ENCODE measurements at regions of chr22 and their contacts with region 1.

Region 1: GRCh38 chr22:37538590-37539357 is 19.6 kb upstream of the CARD10 start:
- DNase-seq: peak; percentile 88 to 91
- ATAC-seq: peak; percentile 99 to 100
- H3K4me3 ChIP-seq: no peak overlapping the region
- H3K27ac ChIP-seq: peak overlapping the region; percentile 54 to 75; a peak in 5 of 6 replicates
- H3K4me1 ChIP-seq: peaks cover 24% of the 10 kb centered on the region
- CTCF ChIP-seq: peak; percentile 85
- EP300 ChIP-seq: no peak
- POLR2A ChIP-seq: no peak
- RAD21 ChIP-seq: peak; percentile 96 to 97

Region 2: DNA sequence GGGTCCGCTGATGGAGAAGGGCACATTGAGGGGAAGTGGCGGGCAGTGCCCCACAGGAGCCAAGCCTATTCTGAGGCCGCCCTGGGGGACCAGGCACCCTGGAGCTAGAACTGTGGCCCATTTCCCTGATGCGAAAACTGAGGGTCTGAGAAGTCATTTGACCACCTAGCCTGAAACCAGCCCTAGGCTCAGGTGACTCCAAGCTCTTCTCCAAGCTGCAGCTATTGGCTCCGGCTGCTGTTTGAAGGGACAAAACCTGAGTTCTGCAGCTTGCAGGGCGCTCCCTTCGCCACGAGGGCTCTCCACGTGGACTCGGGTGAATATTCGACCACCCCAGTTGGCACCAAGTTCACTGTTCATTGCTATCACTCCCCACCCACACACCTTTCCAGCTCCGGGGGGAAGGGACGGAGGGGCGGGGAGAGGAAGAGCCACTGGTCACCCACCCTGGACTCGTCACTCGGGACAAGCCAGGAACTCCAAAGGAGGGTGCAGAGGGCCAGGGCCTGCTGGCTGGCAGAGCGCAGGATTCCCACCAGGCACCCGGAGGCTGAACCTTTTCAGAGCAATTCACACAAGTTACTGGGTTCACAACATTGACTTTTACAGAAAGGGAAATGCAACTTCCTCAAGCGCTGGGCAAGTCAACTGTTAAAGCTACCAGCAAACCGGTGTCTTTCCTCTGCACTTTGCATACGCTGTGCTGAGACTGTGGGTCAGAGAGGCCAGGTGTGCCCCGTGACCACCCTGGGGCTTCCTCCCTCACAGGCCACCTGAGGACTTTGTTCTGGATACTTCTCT is 293.7 kb before region 1 on chr22:
- CTCF ChIA-PET with region 1: no interaction called
- POLR2A ChIA-PET with region 1: no interaction called
- DNase-seq: no peak
- ATAC-seq: no peak
- H3K4me3 ChIP-seq: no peak overlapping the region
- H3K27ac ChIP-seq: no peak overlapping the region
- H3K4me1 ChIP-seq: peaks cover 3% of the 10 kb centered on the region; the same call in 1 of the 3 replicates
- CTCF ChIP-seq: no peak
- EP300 ChIP-seq: no peak
- POLR2A ChIP-seq: no peak
- RAD21 ChIP-seq: no peak

Region 3: DNA sequence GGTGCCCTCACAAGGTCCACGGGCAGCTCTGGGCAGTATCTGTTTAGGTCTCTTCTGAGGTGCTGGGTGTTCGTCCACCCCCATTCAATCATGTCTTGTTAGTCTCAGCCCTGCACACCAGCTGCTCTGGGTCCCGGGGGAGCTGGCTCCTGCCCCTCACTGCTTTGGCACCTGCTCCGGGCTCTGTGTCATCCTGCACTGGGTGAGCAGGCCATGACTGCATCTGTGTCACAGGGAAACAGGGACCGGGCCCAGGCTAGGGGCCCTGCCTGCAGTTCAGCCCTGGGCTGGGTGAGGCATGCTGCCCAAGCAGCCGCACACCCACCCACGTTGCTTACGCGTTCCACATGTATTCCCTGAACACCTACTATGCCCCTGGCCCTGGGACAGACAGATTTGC is 155.4 kb before region 1 on chr22:
- CTCF ChIA-PET with region 1: no interaction called
- POLR2A ChIA-PET with region 1: no interaction called
- DNase-seq: no peak
- ATAC-seq: no peak
- H3K4me3 ChIP-seq: no peak overlapping the region
- H3K27ac ChIP-seq: no peak overlapping the region
- H3K4me1 ChIP-seq: peaks cover 6% of the 10 kb centered on the region; the same call in 2 of the 3 replicates
- CTCF ChIP-seq: no peak
- EP300 ChIP-seq: no peak
- POLR2A ChIP-seq: no peak
- RAD21 ChIP-seq: no peak

Region 4: GRCh38 chr22:37566903-37567820 is 28.4 kb after region 1 on chr22:
- CTCF ChIA-PET with region 1: interaction called, 771 read pairs
- POLR2A ChIA-PET with region 1: interaction called, 3 read pairs
- DNase-seq: peak; percentile 63 to 68
- ATAC-seq: peak; percentile 38 to 71; a peak in 5 of 6 replicates
- H3K4me3 ChIP-seq: no peak overlapping the region
- H3K27ac ChIP-seq: 0 out of 6 replicates have a peak overlapping the region, but pooled peaks of 1 of the 2 experiments have one; percentile 11
- H3K4me1 ChIP-seq: peaks cover 63% of the 10 kb centered on the region
- CTCF ChIP-seq: peak; percentile 74
- EP300 ChIP-seq: no peak
- POLR2A ChIP-seq: no peak
- RAD21 ChIP-seq: peak; percentile 83

Region 5: DNA sequence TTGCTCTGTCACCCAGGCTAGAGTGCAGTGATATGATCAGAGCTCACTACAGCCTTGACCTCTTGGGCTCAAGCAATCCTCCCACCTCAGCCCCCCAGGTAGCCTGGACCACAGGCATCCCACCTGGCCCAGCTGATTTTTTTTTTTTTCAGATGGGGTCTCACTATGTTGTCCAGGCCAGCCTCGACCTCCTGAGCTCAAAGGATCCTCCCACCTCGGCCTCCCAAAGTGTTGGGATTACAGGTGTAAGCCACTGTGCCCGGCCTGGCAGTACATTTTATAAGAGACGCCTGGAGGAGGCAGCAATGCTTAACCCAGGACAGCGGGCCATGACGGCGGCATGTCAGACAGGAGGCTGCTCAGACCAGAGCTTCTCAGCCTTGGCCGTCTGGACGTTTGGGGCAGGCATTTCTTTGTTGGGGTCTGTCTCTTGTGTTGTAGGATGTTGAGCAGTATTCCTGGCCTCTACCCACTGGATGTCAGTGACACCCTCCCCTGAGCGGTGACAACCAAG is 36.8 kb after region 1 on chr22:
- CTCF ChIA-PET with region 1: interaction called, 771 read pairs
- POLR2A ChIA-PET with region 1: no interaction called
- DNase-seq: no peak
- ATAC-seq: no peak
- H3K4me3 ChIP-seq: no peak overlapping the region
- H3K27ac ChIP-seq: no peak overlapping the region
- H3K4me1 ChIP-seq: peaks cover 13% of the 10 kb centered on the region
- CTCF ChIP-seq: no peak
- EP300 ChIP-seq: no peak
- POLR2A ChIP-seq: no peak
- RAD21 ChIP-seq: no peak

Region 6: DNA sequence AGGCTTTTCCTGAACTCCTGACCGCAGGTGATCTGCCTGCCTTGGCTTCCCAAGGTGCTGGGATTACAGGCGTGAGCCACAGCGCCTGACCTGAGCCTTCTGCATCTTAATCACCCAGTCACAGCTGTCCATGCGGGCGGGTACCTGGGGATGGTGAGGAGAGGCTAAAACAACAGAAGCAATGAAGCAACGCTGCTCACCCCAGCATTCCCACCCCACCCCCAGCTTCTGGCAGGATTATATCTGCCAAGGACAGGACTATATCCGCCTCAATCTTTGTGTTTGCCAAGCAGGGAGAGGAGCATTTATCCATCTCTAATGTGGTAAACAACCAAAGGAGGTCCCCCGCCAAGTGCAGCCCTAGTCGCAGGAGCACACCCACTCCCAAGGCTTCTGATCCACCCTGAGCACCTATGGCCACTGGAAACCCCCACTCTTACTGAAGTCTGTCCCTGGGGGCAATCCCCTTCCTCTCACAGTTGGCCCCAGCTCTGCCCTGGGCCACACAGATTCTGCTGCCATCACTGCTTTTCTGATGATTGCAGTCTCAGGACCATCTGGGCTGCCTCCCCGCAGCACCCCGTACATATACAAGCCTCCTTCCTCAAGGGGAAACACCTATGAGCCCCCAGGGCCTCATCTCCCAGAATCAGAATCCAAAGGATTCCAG is 49.9 kb after region 1 on chr22:
- CTCF ChIA-PET with region 1: interaction called, 101 read pairs
- POLR2A ChIA-PET with region 1: interaction called, 5 read pairs
- DNase-seq: no peak
- ATAC-seq: no peak
- H3K4me3 ChIP-seq: no peak overlapping the region
- H3K27ac ChIP-seq: no peak overlapping the region
- H3K4me1 ChIP-seq: no peaks in the 10 kb centered on the region
- CTCF ChIP-seq: no peak
- EP300 ChIP-seq: no peak
- POLR2A ChIP-seq: no peak
- RAD21 ChIP-seq: no peak